AG04449 (cell line): ENCODE measurements at regions of chr4 and their contacts with region 1.

Region 1: GRCh38 chr4:183261953-183262775 is 57.9 kb downstream of the CLDN22 start:
- DNase-seq: peak; percentile 29
- H3K4me3 ChIP-seq: no peak overlapping the region
- CTCF ChIP-seq: peak; percentile 70

Region 2: DNA sequence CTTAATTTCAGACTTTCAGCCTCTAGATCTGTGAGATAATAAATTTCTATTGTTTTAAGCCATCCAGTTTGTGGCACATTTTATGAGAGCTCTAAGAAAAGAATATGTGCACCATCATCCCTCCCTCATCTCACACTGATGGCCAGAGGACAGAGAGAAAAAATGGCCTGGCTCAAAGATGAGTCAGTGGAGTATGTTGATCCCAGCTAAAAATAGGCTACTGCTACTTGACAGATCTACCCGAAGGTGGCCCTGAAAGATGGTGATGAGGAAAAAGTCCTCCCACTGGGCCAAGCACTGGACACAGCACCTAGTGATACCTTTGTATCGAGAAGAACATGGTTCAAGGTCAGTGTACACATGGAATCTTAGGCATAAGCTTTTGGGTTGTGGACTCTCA is 306.8 kb before region 1 on chr4:
- CTCF ChIA-PET with region 1: interaction called, 16 read pairs
- POLR2A ChIA-PET with region 1: no interaction called
- DNase-seq: no peak
- H3K4me3 ChIP-seq: no peak overlapping the region
- CTCF ChIP-seq: no peak

Region 3: DNA sequence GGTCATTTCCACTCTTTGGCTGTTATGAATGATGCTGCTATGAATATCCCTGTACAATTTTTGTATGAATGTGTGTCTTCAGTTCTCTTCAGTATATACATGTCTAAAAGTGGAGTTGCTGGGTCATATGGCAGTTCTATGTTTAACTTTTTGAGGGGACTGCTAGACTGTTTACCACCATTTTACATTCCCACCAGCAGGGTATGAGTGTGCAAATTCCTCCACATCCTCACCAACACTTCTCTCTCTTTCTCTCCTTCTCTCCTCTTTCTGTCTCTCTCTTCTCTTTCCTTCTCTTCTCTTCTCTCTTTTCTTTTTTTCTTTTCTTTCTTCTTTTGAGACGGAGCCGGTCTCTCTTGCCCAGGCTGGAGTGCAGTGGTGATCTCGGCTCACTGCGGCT is 155.3 kb before region 1 on chr4:
- CTCF ChIA-PET with region 1: interaction called, 15 read pairs
- POLR2A ChIA-PET with region 1: no interaction called
- DNase-seq: no peak
- H3K4me3 ChIP-seq: no peak overlapping the region
- CTCF ChIP-seq: peak; percentile 8

Region 4: DNA sequence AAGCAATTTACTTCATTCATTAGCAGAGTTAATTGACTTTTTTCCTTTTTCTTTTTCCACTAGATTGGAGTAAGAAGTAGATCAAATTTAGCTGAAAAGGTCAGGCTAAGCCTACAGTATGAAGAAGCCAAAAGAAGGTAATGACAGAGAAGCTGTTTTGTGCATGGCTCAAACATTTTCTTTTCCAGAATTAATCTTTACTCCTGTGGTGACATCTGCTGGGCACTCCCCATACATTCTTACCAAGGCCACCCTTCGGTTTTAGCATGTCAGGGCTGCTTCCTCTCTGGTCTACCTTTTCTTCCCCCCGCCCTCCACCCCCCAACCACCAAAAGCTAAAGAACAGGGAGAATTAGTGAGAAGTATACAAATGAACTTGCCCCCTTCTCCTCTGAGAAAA is 12.3 kb before region 1 on chr4:
- CTCF ChIA-PET with region 1: interaction called, 150 read pairs
- POLR2A ChIA-PET with region 1: no interaction called
- DNase-seq: no peak
- H3K4me3 ChIP-seq: no peak overlapping the region
- CTCF ChIP-seq: peak; percentile 43

Region 5: GRCh38 chr4:183295751-183296285 is 33.7 kb after region 1 on chr4:
- CTCF ChIA-PET with region 1: interaction called, 10 read pairs
- POLR2A ChIA-PET with region 1: no interaction called
- DNase-seq: no peak
- H3K4me3 ChIP-seq: no peak overlapping the region
- CTCF ChIP-seq: no peak

Region 6: GRCh38 chr4:183492791-183493221 is 230.6 kb after region 1 on chr4:
- CTCF ChIA-PET with region 1: no interaction called
- POLR2A ChIA-PET with region 1: no interaction called
- DNase-seq: peak; percentile 55
- H3K4me3 ChIP-seq: no peak overlapping the region
- CTCF ChIP-seq: no peak